Adrenal gland (tissue), 19 donors: ENCODE measurements at regions of chr7 and their contacts with region 1.

Region 1: DNA sequence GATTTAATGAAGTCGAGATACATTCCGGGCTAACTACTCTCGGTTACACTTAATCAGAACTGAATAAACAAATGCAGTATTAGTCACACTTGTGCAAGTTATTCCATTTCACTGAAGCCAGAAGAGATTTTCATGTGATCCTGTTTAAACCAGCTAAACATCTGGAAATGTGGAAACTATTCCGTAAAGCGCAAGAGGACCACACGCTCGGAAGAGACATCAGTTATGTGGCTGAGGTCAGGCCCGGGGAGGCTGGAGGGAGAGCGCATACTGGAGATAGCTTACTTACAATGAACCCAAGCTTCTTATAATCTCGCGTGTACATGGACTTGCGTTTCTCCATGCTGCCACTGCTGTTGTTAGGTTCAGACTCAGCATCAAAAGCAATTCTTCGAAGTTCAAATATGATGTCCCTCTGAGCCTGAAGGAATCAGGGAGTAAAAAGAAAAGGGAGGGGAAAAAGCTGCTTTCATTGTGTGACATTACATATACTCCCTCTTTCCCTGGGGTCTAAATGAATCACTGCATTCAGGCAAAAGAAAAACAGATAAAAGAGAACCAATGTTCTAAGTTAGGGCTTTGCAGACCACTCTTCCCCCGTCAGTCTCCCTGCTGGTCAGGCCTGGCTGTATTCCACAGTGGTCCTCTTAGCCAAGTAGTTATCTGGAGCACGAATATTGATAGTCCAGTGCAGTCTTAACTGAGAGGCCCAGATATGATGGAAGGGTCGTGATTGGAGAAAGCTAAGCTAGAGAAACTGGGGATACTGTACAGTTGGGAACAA is 237.4 kb downstream of the ELMO1 start:
- DNase-seq: peak in 1 of 7 donors; percentile 11
- H3K4me3 ChIP-seq: no peak overlapping the region
- H3K27ac ChIP-seq: peak overlapping the region in 2 of 5 donors; percentile 31 to 49
- H3K4me1 ChIP-seq: peaks cover 19 to 23% of the 10 kb centered on the region in 2 donors
- H3K27me3 ChIP-seq: no peaks in the 10 kb centered on the region
- CTCF ChIP-seq: no peak
- POLR2A ChIP-seq: no peak

Region 2: GRCh38 chr7:36958111-36958733 is 253.1 kb before region 1 on chr7:
- intact Hi-C with region 1: no loop called
- DNase-seq: peak in 1 of 7 donors; percentile 17
- H3K4me3 ChIP-seq: no peak overlapping the region
- H3K27ac ChIP-seq: no peak overlapping the region
- H3K4me1 ChIP-seq: peaks cover 0 to 11% of the 10 kb centered on the region in 2 donors
- H3K27me3 ChIP-seq: no peaks in the 10 kb centered on the region
- CTCF ChIP-seq: no peak
- POLR2A ChIP-seq: no peak

Region 3: GRCh38 chr7:37504801-37505200 is 293.5 kb after region 1 on chr7:
- intact Hi-C with region 1: loop called in 1 of 2 experiments (anchors 10 kb)
- DNase-seq: no peak
- H3K4me3 ChIP-seq: no peak overlapping the region
- H3K27ac ChIP-seq: no peak overlapping the region
- H3K4me1 ChIP-seq: no peaks in the 10 kb centered on the region
- H3K27me3 ChIP-seq: no peaks in the 10 kb centered on the region
- CTCF ChIP-seq: no peak
- POLR2A ChIP-seq: no peak

Region 4: DNA sequence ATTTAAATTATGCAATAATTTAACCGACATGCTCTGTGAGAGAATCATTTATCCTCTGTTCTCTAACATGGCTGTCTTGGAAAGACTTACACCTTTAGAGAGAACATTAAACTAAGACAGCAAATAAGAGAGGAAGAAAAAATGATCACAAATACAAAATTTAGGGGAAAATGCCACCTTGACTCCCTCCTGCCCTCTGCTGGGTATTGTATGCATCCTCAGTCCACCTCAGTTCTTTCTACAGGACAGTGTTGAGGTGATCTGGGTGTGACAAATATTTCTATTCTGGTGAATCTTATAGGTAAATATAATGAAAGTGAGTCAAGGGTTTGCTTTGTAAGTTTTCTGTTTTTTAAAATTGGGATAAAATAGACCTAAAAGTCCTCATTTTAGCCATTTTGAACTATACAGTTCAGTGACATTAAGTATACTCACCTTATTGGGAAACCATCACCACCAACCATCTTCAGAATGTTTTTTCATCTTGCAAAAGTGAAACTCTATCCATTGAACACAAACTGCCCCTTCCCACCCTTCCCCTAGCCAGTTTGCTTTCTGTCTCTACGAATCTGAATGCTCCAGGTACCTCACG is 298.9 kb after region 1 on chr7:
- intact Hi-C with region 1: loop called (anchors 10 kb)
- DNase-seq: peak in 1 of 7 donors; percentile 10
- H3K4me3 ChIP-seq: no peak overlapping the region
- H3K27ac ChIP-seq: no peak overlapping the region
- H3K4me1 ChIP-seq: no peaks in the 10 kb centered on the region
- H3K27me3 ChIP-seq: no peaks in the 10 kb centered on the region
- CTCF ChIP-seq: peak; percentile 30 to 62 (median 57)
- POLR2A ChIP-seq: no peak